HepG2 (cell line): ENCODE measurements at regions of chr2 and their contacts with region 1.

Region 1: GRCh38 chr2:61144697-61145268 is 17.2 kb upstream of the C2orf74 start:
- DNase-seq: peak; percentile 99
- ATAC-seq: peak; percentile 99
- H3K4me3 ChIP-seq: peak overlapping the region; percentile 75 to 90 (median 81)
- H3K27ac ChIP-seq: peak overlapping the region; percentile 72
- H3K4me1 ChIP-seq: peaks cover 9% of the 10 kb centered on the region
- H3K27me3 ChIP-seq: no peaks in the 10 kb centered on the region
- CTCF ChIP-seq: peak; percentile 49; the same call in 1 of the 2 replicates
- EP300 ChIP-seq: no peak
- POLR2A ChIP-seq: peak; percentile 86 to 92
- RAD21 ChIP-seq: peak; percentile 21; the same call in 1 of the 2 replicates

Region 2: DNA sequence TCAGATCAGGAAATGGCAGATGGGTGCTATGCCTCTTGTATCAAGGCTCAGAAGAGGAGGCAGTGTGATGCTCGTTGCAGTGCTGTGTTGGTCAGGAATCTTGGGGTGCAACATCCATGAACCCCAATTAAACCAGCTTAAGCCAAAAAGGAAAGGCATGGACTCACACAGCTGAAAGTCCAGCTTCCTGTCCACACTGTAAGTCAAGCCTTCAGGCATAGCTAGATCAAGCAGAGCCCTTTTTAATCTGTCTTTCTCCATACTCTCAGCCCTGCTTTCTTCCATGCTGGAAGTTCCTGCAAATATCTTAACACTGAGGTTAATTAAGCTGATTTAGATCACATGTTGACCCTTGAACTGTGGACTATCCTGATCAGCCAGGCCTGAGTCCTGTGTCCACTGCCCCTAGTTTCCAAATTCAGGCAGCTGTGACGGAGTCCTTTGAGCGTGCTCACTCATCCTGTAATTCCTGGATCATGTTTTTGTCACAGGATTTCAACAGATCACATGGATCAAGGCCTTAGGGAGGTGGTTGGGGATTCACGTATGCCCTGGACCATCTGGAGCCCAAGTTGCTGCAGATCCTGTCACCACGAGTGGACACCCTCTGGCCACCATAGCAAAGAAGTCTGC is 12.7 kb after region 1 on chr2:
- CTCF ChIA-PET with region 1: no interaction called
- POLR2A ChIA-PET with region 1: interaction called, 12 read pairs
- in situ Hi-C with region 1: no loop called
- intact Hi-C with region 1: no loop called
- DNase-seq: no peak
- ATAC-seq: no peak; the same call in 2 of the 3 replicates
- H3K4me3 ChIP-seq: no peak overlapping the region
- H3K27ac ChIP-seq: no peak overlapping the region
- H3K4me1 ChIP-seq: no peaks in the 10 kb centered on the region
- H3K27me3 ChIP-seq: no peaks in the 10 kb centered on the region
- CTCF ChIP-seq: no peak
- EP300 ChIP-seq: no peak
- POLR2A ChIP-seq: no peak
- RAD21 ChIP-seq: no peak

Region 3: GRCh38 chr2:61262699-61263098 is 117.9 kb after region 1 on chr2:
- CTCF ChIA-PET with region 1: no interaction called
- POLR2A ChIA-PET with region 1: no interaction called
- in situ Hi-C with region 1: no loop called
- intact Hi-C with region 1: no loop called
- DNase-seq: no peak
- ATAC-seq: no peak
- H3K4me3 ChIP-seq: no peak overlapping the region
- H3K27ac ChIP-seq: no peak overlapping the region
- H3K4me1 ChIP-seq: peaks cover 16% of the 10 kb centered on the region
- H3K27me3 ChIP-seq: no peaks in the 10 kb centered on the region
- CTCF ChIP-seq: no peak
- EP300 ChIP-seq: no peak
- POLR2A ChIP-seq: no peak
- RAD21 ChIP-seq: no peak

Region 4: GRCh38 chr2:61640406-61640805 is 495.6 kb after region 1 on chr2:
- CTCF ChIA-PET with region 1: no interaction called
- POLR2A ChIA-PET with region 1: no interaction called
- in situ Hi-C with region 1: no loop called
- intact Hi-C with region 1: no loop called
- DNase-seq: no peak
- ATAC-seq: no peak
- H3K4me3 ChIP-seq: no peak overlapping the region
- H3K27ac ChIP-seq: no peak overlapping the region
- H3K4me1 ChIP-seq: no peaks in the 10 kb centered on the region
- H3K27me3 ChIP-seq: no peaks in the 10 kb centered on the region
- CTCF ChIP-seq: no peak
- EP300 ChIP-seq: no peak
- POLR2A ChIP-seq: no peak
- RAD21 ChIP-seq: no peak